Panc1 (cell line): ENCODE measurements at regions of chr1 and their contacts with region 1.

Region 1: DNA sequence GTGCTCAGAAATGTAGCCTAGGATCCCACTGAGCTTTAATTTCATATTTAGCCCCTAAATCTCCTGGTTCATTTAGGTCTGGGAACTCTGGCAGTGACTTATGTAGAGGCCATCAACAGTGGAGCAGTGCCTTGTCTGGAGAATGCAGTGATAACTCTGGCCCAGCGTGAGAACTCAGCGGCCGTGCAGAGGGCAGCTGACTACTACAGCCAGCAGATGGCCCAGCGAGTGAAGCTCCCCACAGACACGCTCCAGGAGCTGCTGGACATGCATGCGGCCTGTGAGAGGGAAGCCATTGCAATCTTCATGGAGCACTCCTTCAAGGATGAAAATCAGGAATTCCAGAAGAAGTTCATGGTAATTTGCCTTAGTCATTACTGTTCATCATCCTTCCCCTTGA is 17.8 kb downstream of the GBP6 start:
- DNase-seq: no peak
- ATAC-seq: no peak
- H3K4me3 ChIP-seq: no peak overlapping the region
- H3K27ac ChIP-seq: no peak overlapping the region
- H3K4me1 ChIP-seq: no peaks in the 10 kb centered on the region
- H3K27me3 ChIP-seq: no peaks in the 10 kb centered on the region
- CTCF ChIP-seq: peak; percentile 1; the same call in 1 of the 2 replicates

Region 2: DNA sequence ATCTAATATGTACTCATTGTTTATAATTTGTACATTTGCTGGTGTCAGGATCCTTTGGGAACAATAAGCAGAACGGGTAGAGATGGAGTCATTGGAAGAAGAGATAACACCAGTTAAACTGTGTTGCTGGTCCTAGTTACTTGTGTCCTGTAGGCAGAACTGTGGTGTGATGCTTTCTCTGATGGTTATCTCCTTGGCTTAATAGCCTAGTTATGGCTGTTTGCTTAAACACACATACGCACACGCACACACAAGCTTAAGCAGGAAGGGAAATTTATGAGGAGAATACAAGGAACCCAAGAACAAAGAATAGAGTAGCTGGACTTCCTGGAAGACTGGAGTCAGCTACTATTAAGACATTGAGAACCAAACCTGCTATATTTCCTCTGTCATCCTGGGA is 703.2 kb before region 1 on chr1:
- CTCF ChIA-PET with region 1: no interaction called
- POLR2A ChIA-PET with region 1: interaction called, 12 read pairs
- in situ Hi-C with region 1: no loop called
- intact Hi-C with region 1: no loop called
- DNase-seq: no peak
- ATAC-seq: no peak
- H3K4me3 ChIP-seq: no peak overlapping the region
- H3K27ac ChIP-seq: no peak overlapping the region
- H3K4me1 ChIP-seq: peaks cover 9% of the 10 kb centered on the region
- H3K27me3 ChIP-seq: no peaks in the 10 kb centered on the region; the same call in 1 of the 2 replicates
- CTCF ChIP-seq: no peak

Region 3: GRCh38 chr1:89615676-89616598 is 234.3 kb after region 1 on chr1:
- CTCF ChIA-PET with region 1: no interaction called
- POLR2A ChIA-PET with region 1: no interaction called
- in situ Hi-C with region 1: no loop called
- intact Hi-C with region 1: no loop called
- DNase-seq: no peak
- ATAC-seq: peak; percentile 83
- H3K4me3 ChIP-seq: no peak overlapping the region
- H3K27ac ChIP-seq: no peak overlapping the region
- H3K4me1 ChIP-seq: no peaks in the 10 kb centered on the region
- H3K27me3 ChIP-seq: no peaks in the 10 kb centered on the region
- CTCF ChIP-seq: peak; percentile 70